ENCODE measurements at regions of chr9 and their contacts with region 1.

Region 1: GRCh38 chr9:87516222-87516925 is 18.7 kb downstream of the DAPK1 start:
- H3K4me3 Mint-ChIP-seq: peak overlapping the region; percentile 57
- H3K27ac Mint-ChIP-seq: peak overlapping the region; percentile 87
- H3K4me1 Mint-ChIP-seq: peaks cover 90% of the 10 kb centered on the region
- H3K27me3 Mint-ChIP-seq: no peaks in the 10 kb centered on the region

Region 2: DNA sequence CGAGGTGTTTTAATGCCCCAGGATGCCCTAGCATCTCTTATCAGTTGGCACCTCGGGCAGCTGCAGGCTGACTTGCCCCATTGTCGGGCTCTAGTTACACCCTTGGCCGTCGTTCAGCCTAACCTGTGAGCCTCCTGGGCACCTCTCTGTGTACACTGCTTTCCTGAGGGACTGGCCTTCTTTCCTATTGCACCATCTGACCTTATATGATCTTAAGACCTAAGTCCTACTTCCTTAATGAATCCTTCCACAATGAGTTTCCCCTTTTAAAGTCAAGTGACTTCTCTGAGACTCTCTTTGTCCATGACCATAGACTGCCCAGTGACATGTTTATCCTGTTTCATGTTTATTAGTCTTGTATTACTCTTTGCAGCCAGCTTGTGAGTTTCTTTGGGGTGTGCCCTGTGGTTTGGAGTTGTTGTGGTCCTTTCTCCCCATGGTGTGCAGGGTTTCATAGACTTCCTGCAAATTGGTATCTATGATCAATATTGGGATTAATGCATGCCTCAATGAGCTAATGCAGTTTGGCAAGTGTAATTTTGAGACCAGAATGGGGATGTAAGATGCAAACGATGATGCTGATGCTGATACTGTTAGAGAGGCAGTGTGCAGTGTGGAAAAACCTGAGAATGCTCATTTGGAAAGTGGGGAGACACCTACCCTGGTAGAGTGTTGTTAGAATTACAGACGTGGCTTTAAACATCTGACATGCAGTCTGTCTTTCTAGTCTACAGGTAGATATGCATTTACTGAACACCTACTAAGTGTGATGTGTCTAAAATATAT is 13.7 kb before region 1 on chr9:
- intact Hi-C with region 1: loop called (anchors 2 kb)
- H3K4me3 Mint-ChIP-seq: peak overlapping the region; percentile 39
- H3K27ac Mint-ChIP-seq: peak overlapping the region; percentile 77
- H3K4me1 Mint-ChIP-seq: peaks cover 40% of the 10 kb centered on the region
- H3K27me3 Mint-ChIP-seq: no peaks in the 10 kb centered on the region

Measured in dendritic cell treated with granulocyte-macrophage colony-stimulating factor and Interleukin-4, amounts not matched to agents 40 ng/mL and 50 ng/mL, for 4 days (primary cell).